PC-3 (cell line): ENCODE measurements at regions of chr4 and their contacts with region 1.

Region 1: GRCh38 chr4:183580370-183580769 is 75.5 kb downstream of the ING2 start:
- DNase-seq: no peak
- ATAC-seq: no peak
- H3K4me3 ChIP-seq: no peak overlapping the region
- H3K27ac ChIP-seq: no peak overlapping the region
- H3K4me1 ChIP-seq: no peaks in the 10 kb centered on the region
- H3K27me3 ChIP-seq: no peaks in the 10 kb centered on the region
- CTCF ChIP-seq: no peak

Region 2: GRCh38 chr4:183594823-183595222 is 14.5 kb after region 1 on chr4:
- CTCF ChIA-PET with region 1: interaction called, 10 read pairs
- POLR2A ChIA-PET with region 1: no interaction called
- intact Hi-C with region 1: no loop called
- DNase-seq: no peak
- ATAC-seq: no peak
- H3K4me3 ChIP-seq: no peak overlapping the region
- H3K27ac ChIP-seq: no peak overlapping the region
- H3K4me1 ChIP-seq: no peaks in the 10 kb centered on the region; the same call in 1 of the 2 replicates
- H3K27me3 ChIP-seq: no peaks in the 10 kb centered on the region
- CTCF ChIP-seq: no peak